ENCODE measurements at regions of chr4 and their contacts with region 1.

Region 1: DNA sequence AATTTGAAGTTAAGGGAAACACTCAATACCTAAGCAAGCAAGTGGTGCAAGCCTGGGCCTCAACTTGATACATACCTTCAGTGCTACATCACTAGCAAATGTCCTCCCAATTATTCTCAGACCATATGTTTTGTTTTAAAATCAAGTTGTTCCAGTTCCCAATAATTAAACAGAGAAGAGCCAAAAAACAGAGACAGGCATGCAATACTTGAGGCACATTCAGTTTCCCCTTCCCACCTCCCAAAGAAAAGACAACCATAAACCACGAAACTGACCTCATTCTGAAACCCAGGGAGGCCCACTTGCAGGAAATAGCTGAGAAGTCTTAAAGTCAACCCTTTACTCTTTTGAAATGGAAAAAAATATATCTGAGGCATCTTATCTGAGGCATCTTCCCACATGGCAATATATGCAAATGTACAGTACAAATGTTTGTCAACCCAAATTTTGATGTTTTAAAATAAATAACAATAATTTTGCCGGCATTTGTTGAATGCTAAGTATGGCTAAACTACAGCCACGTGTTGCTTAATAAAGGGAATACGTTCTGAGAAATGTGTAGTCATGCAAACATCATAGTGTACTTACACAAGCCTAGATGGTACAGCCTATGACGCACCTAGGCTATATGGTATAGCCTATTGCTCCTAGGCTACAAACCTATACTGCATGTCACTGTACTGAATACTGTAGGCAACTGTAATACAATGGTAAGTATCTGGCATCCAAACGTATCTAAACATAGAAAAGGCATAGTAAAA is 147.5 kb downstream of the TSPAN5 start:
- DNase-seq: peak; percentile 57
- ATAC-seq: peak; percentile 79
- H3K4me3 Mint-ChIP-seq: peak overlapping the region; percentile 0
- H3K27ac Mint-ChIP-seq: peak overlapping the region; percentile 58
- H3K4me1 Mint-ChIP-seq: peaks cover 59% of the 10 kb centered on the region
- H3K27me3 Mint-ChIP-seq: no peaks in the 10 kb centered on the region
- CTCF ChIP-seq: no peak

Region 2: GRCh38 chr4:98601708-98602107 is 90.8 kb after region 1 on chr4:
- CTCF ChIA-PET with region 1: no interaction called
- POLR2A ChIA-PET with region 1: no interaction called
- intact Hi-C with region 1: loop called (anchors 5 kb)
- DNase-seq: peak; percentile 55
- ATAC-seq: peak; percentile 88
- H3K4me3 Mint-ChIP-seq: peak overlapping the region; percentile 34
- H3K27ac Mint-ChIP-seq: peak overlapping the region; percentile 86
- H3K4me1 Mint-ChIP-seq: peaks cover 42% of the 10 kb centered on the region
- H3K27me3 Mint-ChIP-seq: no peaks in the 10 kb centered on the region
- CTCF ChIP-seq: no peak

Measured in activated CD8-positive, alpha-beta T cell treated with anti-CD3 and anti-CD28 coated beads for 36 hours (primary cell).